ENCODE measurements at regions of chr3 and their contacts with region 1.

Region 1: GRCh38 chr3:195226900-195227447 is 44.0 kb downstream of the XXYLT1 start:
- DNase-seq: no peak
- H3K4me3 ChIP-seq: no peak overlapping the region
- H3K27ac ChIP-seq: no peak overlapping the region
- H3K4me1 ChIP-seq: peaks cover 2 to 8% of the 10 kb centered on the region in 2 experiments; a peak in 3 of 4 replicates
- H3K27me3 ChIP-seq: no peaks in the 10 kb centered on the region
- CTCF ChIP-seq: peak; percentile 38
- EP300 ChIP-seq: no peak
- RAD21 ChIP-seq: peak; percentile 48

Region 2: GRCh38 chr3:195238586-195239118 is 11.7 kb after region 1 on chr3:
- CTCF ChIA-PET with region 1: interaction called, 16 read pairs
- POLR2A ChIA-PET with region 1: no interaction called
- DNase-seq: no peak
- H3K4me3 ChIP-seq: no peak overlapping the region
- H3K27ac ChIP-seq: peak overlapping the region in 1 of 2 experiments; percentile 12; a peak in 1 of 4 replicates
- H3K4me1 ChIP-seq: peaks cover 0 to 36% of the 10 kb centered on the region in 2 experiments; a peak in 2 of 4 replicates
- H3K27me3 ChIP-seq: no peaks in the 10 kb centered on the region
- CTCF ChIP-seq: no peak
- EP300 ChIP-seq: no peak
- RAD21 ChIP-seq: no peak

Region 3: DNA sequence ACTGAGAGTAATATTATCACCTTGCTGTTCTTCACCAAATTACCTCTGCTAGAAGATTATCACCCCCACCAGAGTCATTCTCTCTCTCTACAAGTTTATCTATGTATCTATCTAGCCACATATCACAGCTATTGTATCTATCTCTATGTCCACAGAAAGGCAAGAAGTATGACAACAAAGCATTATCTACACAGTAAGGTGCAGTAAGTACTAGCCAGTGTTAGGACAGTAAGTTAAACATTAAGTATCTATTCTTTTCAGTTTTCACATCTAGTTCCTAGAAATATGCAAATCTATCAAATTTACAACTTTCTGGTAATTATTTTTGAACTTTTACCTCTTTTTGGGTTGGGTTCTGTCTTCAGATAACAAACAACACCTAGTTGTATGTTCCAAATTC is 70.5 kb after region 1 on chr3:
- CTCF ChIA-PET with region 1: no interaction called
- POLR2A ChIA-PET with region 1: no interaction called
- DNase-seq: no peak
- H3K4me3 ChIP-seq: no peak overlapping the region
- H3K27ac ChIP-seq: no peak overlapping the region
- H3K4me1 ChIP-seq: no peaks in the 10 kb centered on the region
- H3K27me3 ChIP-seq: no peaks in the 10 kb centered on the region
- CTCF ChIP-seq: no peak
- EP300 ChIP-seq: no peak
- RAD21 ChIP-seq: no peak

Region 4: DNA sequence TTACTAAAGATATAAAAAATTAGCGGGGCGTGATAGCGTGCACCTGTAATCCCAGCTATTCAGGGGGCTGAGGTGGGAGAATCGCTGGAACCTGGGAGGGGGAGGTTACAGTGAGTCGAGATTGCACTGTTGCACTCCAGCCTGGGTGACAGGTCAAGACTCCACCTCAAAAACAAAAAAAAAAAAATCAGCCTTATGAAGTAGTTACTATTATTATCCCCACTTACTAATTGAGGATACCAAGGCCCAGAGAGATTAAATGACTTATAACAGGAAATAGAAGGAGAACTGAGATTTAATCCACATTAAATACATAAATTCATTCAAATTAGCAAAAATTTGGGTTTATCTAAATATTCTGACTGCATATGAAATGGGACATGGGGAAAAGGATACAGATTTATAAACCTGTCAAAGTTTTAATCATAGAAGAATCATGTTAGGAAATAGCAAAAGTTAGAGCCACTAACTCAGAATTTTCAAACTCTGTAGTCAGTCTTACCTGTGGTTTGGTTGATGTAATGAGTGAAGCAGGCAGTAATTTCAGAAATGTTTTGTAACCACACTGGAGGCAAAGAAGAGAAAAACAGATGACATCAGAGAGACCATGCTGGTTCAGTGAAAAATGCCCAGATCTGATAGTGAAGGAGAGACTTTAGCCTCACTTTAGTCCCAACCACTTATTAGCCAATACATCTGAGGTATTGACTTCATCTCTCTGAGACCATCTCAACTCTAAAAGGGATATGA is 240.8 kb after region 1 on chr3:
- CTCF ChIA-PET with region 1: no interaction called
- POLR2A ChIA-PET with region 1: no interaction called
- DNase-seq: no peak
- H3K4me3 ChIP-seq: no peak overlapping the region
- H3K27ac ChIP-seq: no peak overlapping the region
- H3K4me1 ChIP-seq: no peaks in the 10 kb centered on the region
- H3K27me3 ChIP-seq: no peaks in the 10 kb centered on the region
- CTCF ChIP-seq: no peak
- EP300 ChIP-seq: no peak
- RAD21 ChIP-seq: no peak

Measured in SK-N-SH (cell line).